ENCODE measurements at regions of chr3 and their contacts with region 1.

Region 1: GRCh38 chr3:157436583-157437291 is at the start of gene PTX3:
- DNase-seq: peak; percentile 85
- H3K4me3 ChIP-seq: peak within 1 kb of the TSS; percentile 68 to 93 (median 79)
- H3K27ac ChIP-seq: peak within 1 kb of the TSS; percentile 74
- H3K4me1 ChIP-seq: peaks cover 31% of the 10 kb centered on the region
- H3K27me3 ChIP-seq: no peaks in the 10 kb centered on the region
- CTCF ChIP-seq: no peak
- POLR2A ChIP-seq: peak; percentile 89
- total RNA-seq, gene PTX3: 149 and 172 TPM in 2 replicates

Region 2: GRCh38 chr3:157190388-157190872 is 246.3 kb before region 1 on chr3:
- CTCF ChIA-PET with region 1: no interaction called
- POLR2A ChIA-PET with region 1: no interaction called
- dilution Hi-C with region 1: no loop called
- intact Hi-C with region 1: no loop called
- DNase-seq: no peak
- H3K4me3 ChIP-seq: no peak overlapping the region
- H3K27ac ChIP-seq: no peak overlapping the region
- H3K4me1 ChIP-seq: no peaks in the 10 kb centered on the region
- H3K27me3 ChIP-seq: peaks cover 0 to 2% of the 10 kb centered on the region in 2 experiments
- CTCF ChIP-seq: no peak
- POLR2A ChIP-seq: no peak

Region 3: GRCh38 chr3:157261000-157261399 is 175.7 kb before region 1 on chr3:
- CTCF ChIA-PET with region 1: no interaction called
- POLR2A ChIA-PET with region 1: no interaction called
- dilution Hi-C with region 1: no loop called
- intact Hi-C with region 1: loop called (anchors 5 kb)
- DNase-seq: no peak
- H3K4me3 ChIP-seq: no peak overlapping the region
- H3K27ac ChIP-seq: no peak overlapping the region
- H3K4me1 ChIP-seq: peaks cover 17% of the 10 kb centered on the region
- H3K27me3 ChIP-seq: no peaks in the 10 kb centered on the region
- CTCF ChIP-seq: no peak
- POLR2A ChIP-seq: no peak

Region 4: DNA sequence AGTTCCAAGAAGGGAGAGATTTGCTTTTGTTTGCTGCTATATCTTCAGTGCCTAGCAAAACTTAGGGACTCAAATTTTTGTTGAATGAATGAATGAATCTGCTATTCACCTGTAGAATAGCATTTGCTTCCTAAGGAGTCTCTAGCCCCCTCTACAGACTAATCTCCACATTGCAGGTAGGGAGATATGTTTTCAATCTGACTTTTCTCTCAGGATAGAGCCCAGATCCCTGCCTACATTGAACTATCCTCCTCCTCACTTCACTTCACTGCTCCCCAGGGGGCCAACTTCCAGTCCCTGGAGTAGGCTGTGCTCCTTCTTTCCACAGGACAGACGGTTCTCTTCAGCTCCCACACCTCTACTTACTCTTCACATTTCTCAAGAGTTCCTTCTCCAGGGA is 82.0 kb before region 1 on chr3:
- CTCF ChIA-PET with region 1: interaction called, 14 read pairs
- POLR2A ChIA-PET with region 1: interaction called, 18 read pairs
- dilution Hi-C with region 1: no loop called
- intact Hi-C with region 1: no loop called
- DNase-seq: peak; percentile 64
- H3K4me3 ChIP-seq: no peak overlapping the region
- H3K27ac ChIP-seq: peak overlapping the region; percentile 8
- H3K4me1 ChIP-seq: peaks cover 41% of the 10 kb centered on the region
- H3K27me3 ChIP-seq: no peaks in the 10 kb centered on the region
- CTCF ChIP-seq: peak; percentile 47 to 62
- POLR2A ChIP-seq: no peak

Region 5: GRCh38 chr3:157417247-157417646 is 19.5 kb before region 1 on chr3:
- CTCF ChIA-PET with region 1: interaction called, 4 read pairs
- POLR2A ChIA-PET with region 1: no interaction called
- dilution Hi-C with region 1: no loop called
- intact Hi-C with region 1: loop called (anchors 1 kb)
- DNase-seq: peak; percentile 50
- H3K4me3 ChIP-seq: peak overlapping the region in 1 of 3 experiments; percentile 27
- H3K27ac ChIP-seq: peak overlapping the region; percentile 95
- H3K4me1 ChIP-seq: peaks cover 43% of the 10 kb centered on the region
- H3K27me3 ChIP-seq: no peaks in the 10 kb centered on the region
- CTCF ChIP-seq: no peak
- POLR2A ChIP-seq: no peak

Region 6: GRCh38 chr3:157746391-157746790 is 309.7 kb after region 1 on chr3:
- CTCF ChIA-PET with region 1: no interaction called
- POLR2A ChIA-PET with region 1: no interaction called
- dilution Hi-C with region 1: no loop called
- intact Hi-C with region 1: no loop called
- DNase-seq: no peak
- H3K4me3 ChIP-seq: no peak overlapping the region
- H3K27ac ChIP-seq: no peak overlapping the region
- H3K4me1 ChIP-seq: no peaks in the 10 kb centered on the region
- H3K27me3 ChIP-seq: no peaks in the 10 kb centered on the region
- CTCF ChIP-seq: no peak
- POLR2A ChIP-seq: no peak

Measured in endothelial cell of umbilical vein (primary cell).